AG04450 (cell line): ENCODE measurements at regions of chr7 and their contacts with region 1.

Region 1: DNA sequence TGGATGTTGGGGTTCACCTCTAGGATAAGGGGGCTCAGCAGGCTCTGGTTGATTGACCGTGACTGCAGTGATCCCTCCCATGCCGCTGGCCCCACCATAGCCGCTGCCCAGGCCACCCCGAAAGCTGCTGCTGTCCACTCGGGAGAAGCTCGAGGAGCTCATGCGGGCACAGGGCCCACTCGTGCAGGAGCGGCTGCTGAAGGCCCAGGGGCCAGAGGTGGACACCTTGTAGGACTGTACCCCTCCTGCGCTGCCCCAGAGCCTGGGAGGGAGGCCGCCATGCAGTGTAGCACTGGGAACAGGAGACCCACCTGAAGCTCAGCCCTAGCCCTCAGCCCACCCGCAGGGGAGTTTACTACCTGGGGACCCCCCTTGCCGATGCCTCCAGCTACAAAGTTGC is 70.0 kb downstream of the CHRM2 start:
- DNase-seq: no peak
- H3K4me3 ChIP-seq: no peak overlapping the region
- H3K27ac ChIP-seq: no peak overlapping the region
- H3K27me3 ChIP-seq: no peaks in the 10 kb centered on the region
- CTCF ChIP-seq: no peak

Region 2: GRCh38 chr7:136869001-136869961 is 69.2 kb before region 1 on chr7:
- CTCF ChIA-PET with region 1: interaction called, 7 read pairs
- POLR2A ChIA-PET with region 1: interaction called, 14 read pairs
- DNase-seq: no peak
- H3K4me3 ChIP-seq: peak overlapping the region; percentile 87
- H3K27ac ChIP-seq: peak overlapping the region; percentile 72
- H3K27me3 ChIP-seq: no peaks in the 10 kb centered on the region
- CTCF ChIP-seq: no peak

Region 3: GRCh38 chr7:137371616-137372015 is 433.1 kb after region 1 on chr7:
- CTCF ChIA-PET with region 1: no interaction called
- POLR2A ChIA-PET with region 1: no interaction called
- DNase-seq: no peak
- H3K4me3 ChIP-seq: no peak overlapping the region
- H3K27ac ChIP-seq: no peak overlapping the region
- H3K27me3 ChIP-seq: no peaks in the 10 kb centered on the region
- CTCF ChIP-seq: no peak